Activated T-helper 1 cell treated with anti-CD3 and anti-CD28 coated beads, Interleukin-12 subunit alpha, Interleukin-12 subunit beta, Interleukin-2, Interleukin-4 antibody, amounts not matched to agents 30 ng/mL and 10 ng/mL and 1 ng/mL, durations not matched to agents 14 hours and 24 hours and 36 hours (primary cell): ENCODE measurements at regions of chr11 and their contacts with region 1.

Region 1: GRCh38 chr11:92941676-92942571 is 27.5 kb upstream of the MTNR1B start:
- DNase-seq: no peak
- H3K4me3 Mint-ChIP-seq: no peak overlapping the region
- H3K27ac Mint-ChIP-seq: no peak overlapping the region
- H3K4me1 Mint-ChIP-seq: peaks cover 8% of the 10 kb centered on the region
- H3K27me3 Mint-ChIP-seq: peaks cover 2% of the 10 kb centered on the region

Region 2: GRCh38 chr11:93166862-93167261 is 224.9 kb after region 1 on chr11:
- intact Hi-C with region 1: loop called (anchors 1 kb)
- DNase-seq: no peak
- H3K4me3 Mint-ChIP-seq: no peak overlapping the region
- H3K27ac Mint-ChIP-seq: no peak overlapping the region
- H3K4me1 Mint-ChIP-seq: peaks cover 19% of the 10 kb centered on the region
- H3K27me3 Mint-ChIP-seq: no peaks in the 10 kb centered on the region

Region 3: GRCh38 chr11:93225662-93226061 is 283.7 kb after region 1 on chr11:
- intact Hi-C with region 1: loop called (anchors 1 kb)
- DNase-seq: no peak
- H3K4me3 Mint-ChIP-seq: no peak overlapping the region
- H3K27ac Mint-ChIP-seq: no peak overlapping the region
- H3K4me1 Mint-ChIP-seq: no peaks in the 10 kb centered on the region
- H3K27me3 Mint-ChIP-seq: peaks cover 2% of the 10 kb centered on the region

Region 4: DNA sequence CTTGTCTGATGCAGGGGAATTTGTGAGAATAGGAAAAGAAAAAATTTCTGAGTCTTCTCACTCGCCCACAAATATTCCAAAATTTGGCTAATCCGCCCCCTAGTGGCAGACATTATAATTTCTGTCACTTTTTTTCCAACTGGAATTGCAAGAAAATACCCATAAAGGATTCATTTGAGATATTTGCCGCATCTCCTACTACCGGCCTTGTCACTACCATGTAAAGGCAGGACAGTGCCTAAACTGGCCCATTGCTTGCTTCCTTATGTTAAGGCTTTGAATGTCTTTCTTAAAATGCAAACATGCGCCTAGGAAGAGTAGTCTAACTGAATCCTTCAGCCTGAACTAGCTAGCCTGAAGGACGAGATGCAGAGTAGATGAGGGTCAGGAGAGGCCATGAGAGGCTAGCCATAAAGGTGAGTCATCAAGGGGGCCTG is 710.3 kb after region 1 on chr11:
- intact Hi-C with region 1: loop called (anchors 1 kb)
- DNase-seq: no peak
- H3K4me3 Mint-ChIP-seq: no peak overlapping the region
- H3K27ac Mint-ChIP-seq: no peak overlapping the region
- H3K4me1 Mint-ChIP-seq: peaks cover 22% of the 10 kb centered on the region
- H3K27me3 Mint-ChIP-seq: peaks cover 18% of the 10 kb centered on the region